ENCODE measurements at regions of chr12 and their contacts with region 1.

Region 1: DNA sequence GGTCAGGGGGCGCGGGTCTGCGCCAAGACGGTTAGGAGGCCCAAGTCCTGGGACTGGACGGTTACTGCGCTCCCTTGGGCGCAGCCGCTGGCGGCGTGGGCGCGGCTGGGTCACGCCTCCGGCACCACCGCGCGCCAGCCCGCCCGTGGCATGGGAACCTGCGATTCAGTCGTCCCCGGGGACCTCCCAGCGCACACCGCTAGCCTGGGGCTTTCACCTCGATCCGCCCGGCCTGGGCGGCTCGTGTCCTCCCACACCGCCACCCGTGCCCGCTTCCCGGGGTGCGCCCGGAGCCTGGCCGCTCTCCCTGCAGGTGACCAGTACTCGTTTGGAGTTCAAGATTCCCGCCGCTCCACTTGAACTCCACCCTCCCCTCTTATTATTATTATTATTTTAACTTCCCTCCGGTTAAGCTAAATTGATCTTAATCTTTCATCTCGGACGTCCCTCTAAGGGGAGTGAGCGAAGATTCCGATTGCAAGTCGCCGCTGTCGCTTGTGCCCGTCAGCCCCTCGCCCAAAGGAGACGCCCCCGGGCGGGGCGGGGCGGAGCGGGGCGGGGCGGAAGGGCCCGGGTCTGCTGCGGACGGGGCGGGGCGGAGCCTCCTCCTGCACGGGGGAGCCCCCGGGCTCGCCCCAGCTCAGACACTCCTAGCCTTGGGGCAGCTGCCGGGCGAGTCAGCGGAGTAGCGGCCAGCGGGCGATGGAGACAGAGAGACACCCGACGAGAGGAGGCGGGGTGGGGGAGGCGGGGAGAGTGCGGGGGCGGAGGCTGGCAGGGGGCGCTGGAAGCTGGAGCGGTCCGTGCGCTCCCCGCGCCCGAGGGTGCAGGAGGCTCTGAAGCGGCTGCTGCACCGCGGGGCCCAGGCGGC is at the start of gene KCNMB4:
- DNase-seq: peak; percentile 72 to 90 (median 87)
- ATAC-seq: peak; percentile 95 to 97
- H3K4me3 ChIP-seq: peak within 1 kb of the TSS; percentile 99
- H3K27ac ChIP-seq: peak within 1 kb of the TSS; percentile 10
- H3K4me1 ChIP-seq: peaks cover 2% of the 10 kb centered on the region
- H3K27me3 ChIP-seq: no peaks in the 10 kb centered on the region
- total RNA-seq, gene KCNMB4: 2.4 to 4.5 (median 3.2) TPM

Region 2: GRCh38 chr12:70154960-70155589 is 210.8 kb before region 1 on chr12:
- intact Hi-C with region 1: no loop called
- DNase-seq: no peak
- ATAC-seq: no peak
- H3K4me3 ChIP-seq: no peak overlapping the region
- H3K27ac ChIP-seq: no peak overlapping the region
- H3K4me1 ChIP-seq: no peaks in the 10 kb centered on the region
- H3K27me3 ChIP-seq: no peaks in the 10 kb centered on the region

Region 3: GRCh38 chr12:70242695-70243509 is 123.0 kb before region 1 on chr12 and contains the start of gene CNOT2:
- intact Hi-C with region 1: loop called in 1 of 4 experiments (anchors 10 kb)
- DNase-seq: peak; percentile 92 to 96 (median 95)
- ATAC-seq: peak; percentile 98
- H3K4me3 ChIP-seq: peak within 1 kb of the TSS; percentile 86
- H3K27ac ChIP-seq: peak within 1 kb of the TSS; percentile 97
- H3K4me1 ChIP-seq: no peaks in the 10 kb centered on the region
- H3K27me3 ChIP-seq: no peaks in the 10 kb centered on the region
- total RNA-seq, gene CNOT2: 41.7 to 52.7 (median 42.9) TPM

Measured in right cardiac atrium (tissue), 5 donors.